Activated naive CD4-positive, alpha-beta T cell treated with anti-CD3 and anti-CD28 coated beads for 36 hours (primary cell): ENCODE measurements at regions of chr19 and their contacts with region 1.

Region 1: GRCh38 chr19:41785653-41786052 is 10.7 kb upstream of the CEACAM3 start:
- DNase-seq: peak; percentile 86
- H3K4me3 Mint-ChIP-seq: no peak overlapping the region
- H3K27ac Mint-ChIP-seq: no peak overlapping the region
- H3K4me1 Mint-ChIP-seq: peaks cover 17% of the 10 kb centered on the region
- H3K27me3 Mint-ChIP-seq: peaks cover 40% of the 10 kb centered on the region

Region 2: GRCh38 chr19:41775360-41775695 is 10.3 kb before region 1 on chr19:
- CTCF ChIA-PET with region 1: interaction called, 20 read pairs
- intact Hi-C with region 1: no loop called
- DNase-seq: no peak
- H3K4me3 Mint-ChIP-seq: no peak overlapping the region
- H3K27ac Mint-ChIP-seq: no peak overlapping the region
- H3K4me1 Mint-ChIP-seq: peaks cover 36% of the 10 kb centered on the region
- H3K27me3 Mint-ChIP-seq: peaks cover 73% of the 10 kb centered on the region